ENCODE measurements at regions of chr1 and their contacts with region 1.

Region 1: DNA sequence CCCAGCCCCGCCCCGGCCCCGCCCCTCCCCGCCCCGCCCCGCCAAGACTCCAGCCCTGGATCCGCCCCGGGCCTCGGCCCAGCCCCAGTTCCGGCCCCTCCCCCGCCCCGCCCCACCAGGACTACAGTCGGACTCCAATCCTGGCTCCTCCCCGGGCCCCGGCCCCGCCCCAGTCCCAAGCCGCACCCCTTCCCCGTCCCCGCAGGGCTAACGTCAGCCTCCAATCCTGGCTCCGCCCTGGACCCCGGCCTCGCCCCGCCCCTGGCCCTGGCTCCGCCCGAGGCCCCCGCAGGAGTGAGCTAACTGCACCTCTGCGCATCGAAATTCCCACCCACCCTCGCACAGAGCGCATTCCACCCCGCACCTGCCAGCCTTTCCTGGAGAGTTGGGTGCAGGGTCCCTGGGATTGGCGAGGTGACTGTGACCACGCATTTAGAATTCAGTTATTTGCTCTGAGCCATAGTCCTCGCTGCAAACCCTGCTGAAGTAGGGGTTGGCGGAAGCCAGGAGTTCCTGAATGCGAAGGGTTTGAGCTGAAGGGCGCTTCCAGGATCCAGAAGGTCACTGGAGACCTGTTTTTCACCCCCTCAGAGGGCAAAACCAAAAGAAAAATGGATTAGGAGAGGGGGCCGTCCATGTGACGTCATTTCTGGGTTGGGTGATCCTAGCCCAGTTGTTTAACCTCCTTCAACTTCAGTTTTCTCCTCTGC is 588 bp upstream of the IGSF8 start:
- DNase-seq: peak; percentile 99
- ATAC-seq: peak; percentile 78
- H3K4me3 Mint-ChIP-seq: peak overlapping the region; percentile 69
- H3K27ac Mint-ChIP-seq: peak overlapping the region; percentile 88
- H3K4me1 Mint-ChIP-seq: peaks cover 71% of the 10 kb centered on the region
- H3K27me3 Mint-ChIP-seq: peaks cover 5% of the 10 kb centered on the region; the same call in 1 of the 2 replicates
- CTCF ChIP-seq: no peak

Region 2: DNA sequence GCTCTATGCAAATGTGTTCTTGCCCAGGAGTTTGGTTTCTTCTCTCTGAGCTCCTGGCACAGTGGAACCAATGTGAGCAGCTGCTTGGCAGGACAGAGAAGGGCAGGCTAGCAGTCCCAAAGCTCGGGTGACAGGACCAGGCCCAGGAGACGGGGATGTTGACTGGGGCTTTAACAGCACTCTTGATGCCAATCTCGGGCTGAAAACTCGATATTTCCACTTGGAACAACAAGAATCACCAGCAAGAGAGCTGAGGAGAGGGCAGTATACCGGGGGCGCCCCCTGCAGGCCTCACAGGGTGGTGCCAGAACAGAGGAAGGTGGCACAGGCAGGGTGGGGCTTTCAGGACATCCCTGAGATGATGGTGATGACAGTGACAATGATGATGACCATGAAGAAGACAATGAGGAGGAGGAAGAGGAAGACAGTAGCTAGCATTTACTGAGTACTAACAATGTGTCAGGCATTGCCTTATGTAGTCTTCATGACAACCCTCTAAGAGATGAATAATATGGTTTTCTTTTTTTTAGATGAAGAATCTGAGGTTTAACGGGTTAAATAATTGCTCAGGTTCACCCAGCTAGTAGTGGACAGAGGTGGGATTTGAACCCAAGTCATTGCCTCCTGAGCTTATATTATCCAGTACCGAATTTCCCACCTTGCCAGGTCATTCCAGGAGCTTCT is 20.4 kb before region 1 on chr1:
- CTCF ChIA-PET with region 1: interaction called, 170 read pairs
- POLR2A ChIA-PET with region 1: interaction called, 3 read pairs
- DNase-seq: peak; percentile 78
- ATAC-seq: peak; percentile 89
- H3K4me3 Mint-ChIP-seq: no peak overlapping the region
- H3K27ac Mint-ChIP-seq: no peak overlapping the region
- H3K4me1 Mint-ChIP-seq: peaks cover 4% of the 10 kb centered on the region
- H3K27me3 Mint-ChIP-seq: peaks cover 82% of the 10 kb centered on the region
- CTCF ChIP-seq: peak; percentile 95

Region 3: GRCh38 chr1:160117709-160118183 is 18.7 kb after region 1 on chr1:
- CTCF ChIA-PET with region 1: interaction called, 83 read pairs
- POLR2A ChIA-PET with region 1: interaction called, 4 read pairs
- DNase-seq: no peak
- ATAC-seq: peak; percentile 40; the same call in 1 of the 2 replicates
- H3K4me3 Mint-ChIP-seq: 0 out of 2 replicates have a peak overlapping the region, but pooled peaks have one; percentile 16
- H3K27ac Mint-ChIP-seq: no peak overlapping the region
- H3K4me1 Mint-ChIP-seq: peaks cover 58% of the 10 kb centered on the region
- H3K27me3 Mint-ChIP-seq: peaks cover under 1% of the 10 kb centered on the region; the same call in 1 of the 2 replicates
- CTCF ChIP-seq: no peak

Region 4: DNA sequence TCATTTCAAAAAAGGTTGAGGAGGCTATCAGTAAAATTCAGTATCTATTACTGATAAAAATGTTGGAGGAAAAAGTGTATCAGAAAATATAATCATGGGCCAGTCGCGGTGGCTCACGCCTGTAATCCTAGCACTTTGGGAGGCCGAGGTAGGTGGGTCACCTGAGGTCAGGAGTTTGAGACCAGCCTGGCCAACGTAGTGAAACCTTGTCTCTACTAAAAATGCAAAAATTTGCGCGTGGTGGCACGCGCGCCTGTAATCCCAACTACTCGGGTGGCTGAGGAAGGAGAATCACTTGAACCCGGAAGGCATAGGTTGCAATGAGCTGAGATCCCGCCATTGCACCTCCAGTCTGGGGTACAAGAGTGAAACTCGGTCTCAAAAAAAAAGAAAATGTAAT is 47.1 kb after region 1 on chr1:
- CTCF ChIA-PET with region 1: no interaction called
- POLR2A ChIA-PET with region 1: no interaction called
- DNase-seq: no peak
- ATAC-seq: no peak
- H3K4me3 Mint-ChIP-seq: no peak overlapping the region
- H3K27ac Mint-ChIP-seq: no peak overlapping the region
- H3K4me1 Mint-ChIP-seq: peaks cover 6% of the 10 kb centered on the region
- H3K27me3 Mint-ChIP-seq: no peaks in the 10 kb centered on the region; the same call in 1 of the 2 replicates
- CTCF ChIP-seq: no peak

Region 5: GRCh38 chr1:160169553-160170399 is 70.8 kb after region 1 on chr1:
- CTCF ChIA-PET with region 1: interaction called, 12 read pairs
- POLR2A ChIA-PET with region 1: no interaction called
- DNase-seq: peak; percentile 75
- ATAC-seq: peak; percentile 78
- H3K4me3 Mint-ChIP-seq: peak overlapping the region; percentile 42
- H3K27ac Mint-ChIP-seq: peak overlapping the region; percentile 94
- H3K4me1 Mint-ChIP-seq: peaks cover 64% of the 10 kb centered on the region
- H3K27me3 Mint-ChIP-seq: peaks cover 25% of the 10 kb centered on the region
- CTCF ChIP-seq: no peak

Region 6: DNA sequence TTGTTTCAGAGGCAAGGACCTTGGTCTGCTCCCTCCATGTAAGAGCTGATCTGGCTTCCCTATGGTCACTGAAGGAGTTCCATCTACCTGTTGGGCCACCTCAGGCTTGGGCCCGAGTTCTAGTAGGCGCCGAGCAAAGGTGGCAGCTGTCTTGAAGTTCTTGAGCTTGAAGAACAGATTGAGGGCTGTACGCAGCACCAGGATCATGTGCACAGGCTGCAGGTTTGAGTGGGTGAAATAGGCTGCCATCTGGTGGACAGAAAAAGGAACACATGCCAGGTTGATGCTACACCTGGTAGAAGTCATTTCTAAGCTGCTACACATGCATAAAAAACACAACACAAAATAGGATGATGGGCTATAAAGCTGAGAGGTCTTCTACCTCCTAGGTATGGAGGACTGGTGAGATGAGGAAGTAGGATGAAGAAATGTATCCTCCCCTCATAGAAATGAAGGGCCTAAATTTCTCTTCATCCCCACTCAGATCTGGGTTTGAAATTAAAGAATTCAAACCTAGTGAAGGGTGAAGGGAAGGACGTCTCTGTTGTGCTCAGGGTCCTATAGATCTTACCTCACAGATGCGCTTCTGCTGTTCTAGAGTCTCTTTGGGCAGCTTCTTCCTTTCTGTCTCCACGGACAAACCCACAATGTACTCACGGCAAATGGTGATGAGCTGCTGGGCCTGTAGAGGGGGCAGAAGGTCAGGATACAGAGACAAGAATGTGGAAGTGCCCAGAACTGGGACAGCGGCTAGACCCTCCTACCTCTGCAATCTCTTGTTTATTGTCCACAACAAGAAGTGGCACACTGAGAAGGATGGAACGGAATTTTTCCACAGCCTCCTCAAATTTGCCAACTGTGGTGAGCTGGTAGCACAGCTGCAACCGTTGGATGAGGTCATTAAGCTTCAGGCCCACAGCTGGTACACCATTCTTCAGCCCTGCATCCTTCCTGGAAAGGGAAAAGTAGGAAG is 192.5 kb after region 1 on chr1:
- CTCF ChIA-PET with region 1: interaction called, 48 read pairs
- POLR2A ChIA-PET with region 1: no interaction called
- DNase-seq: peak; percentile 61
- ATAC-seq: peak; percentile 95
- H3K4me3 Mint-ChIP-seq: no peak overlapping the region
- H3K27ac Mint-ChIP-seq: no peak overlapping the region
- H3K4me1 Mint-ChIP-seq: peaks cover 2% of the 10 kb centered on the region
- H3K27me3 Mint-ChIP-seq: no peaks in the 10 kb centered on the region
- CTCF ChIP-seq: peak; percentile 66

Region 7: DNA sequence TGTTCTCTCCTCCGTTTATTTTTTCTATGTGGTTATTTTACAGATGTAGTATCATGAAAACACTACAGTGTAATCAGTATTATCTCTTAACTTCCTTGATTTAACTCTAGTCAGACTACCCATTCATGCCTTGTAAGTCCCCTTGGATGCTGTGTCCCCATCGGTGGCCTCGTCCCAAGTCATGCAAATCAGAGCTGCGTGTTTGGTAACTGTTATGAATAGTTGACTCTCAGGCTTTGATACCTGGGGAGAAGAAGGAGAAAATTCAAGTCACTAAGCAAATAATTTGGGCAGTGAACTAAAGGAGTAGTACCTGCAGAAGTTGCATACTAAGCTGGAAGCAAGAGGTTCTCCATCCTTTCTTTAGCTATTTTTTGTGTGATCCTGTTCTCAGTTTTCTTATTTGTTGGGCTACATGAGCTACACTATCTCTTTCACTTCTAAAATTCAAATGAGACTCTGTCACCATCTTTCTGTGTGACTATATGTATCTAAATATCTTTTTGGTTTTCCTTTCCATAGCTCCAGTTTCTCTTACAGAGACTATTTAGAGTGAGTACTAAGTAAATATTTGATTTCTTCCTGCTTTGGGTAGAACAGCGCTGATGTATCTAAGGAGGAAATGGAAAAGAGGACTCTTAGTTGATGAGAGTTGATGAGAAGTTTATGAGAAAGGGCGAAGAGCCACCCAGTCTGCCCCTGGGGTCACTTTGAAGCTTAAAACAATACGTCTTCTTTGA is 352.3 kb after region 1 on chr1:
- CTCF ChIA-PET with region 1: no interaction called
- POLR2A ChIA-PET with region 1: no interaction called
- DNase-seq: no peak
- ATAC-seq: no peak
- H3K4me3 Mint-ChIP-seq: no peak overlapping the region
- H3K27ac Mint-ChIP-seq: no peak overlapping the region
- H3K4me1 Mint-ChIP-seq: no peaks in the 10 kb centered on the region
- H3K27me3 Mint-ChIP-seq: no peaks in the 10 kb centered on the region; the same call in 1 of the 2 replicates
- CTCF ChIP-seq: no peak

Measured in WTC11 (cell line).